CD4-positive, alpha-beta memory T cell (primary cell): ENCODE measurements at regions of chr18 and their contacts with region 1.

Region 1: DNA sequence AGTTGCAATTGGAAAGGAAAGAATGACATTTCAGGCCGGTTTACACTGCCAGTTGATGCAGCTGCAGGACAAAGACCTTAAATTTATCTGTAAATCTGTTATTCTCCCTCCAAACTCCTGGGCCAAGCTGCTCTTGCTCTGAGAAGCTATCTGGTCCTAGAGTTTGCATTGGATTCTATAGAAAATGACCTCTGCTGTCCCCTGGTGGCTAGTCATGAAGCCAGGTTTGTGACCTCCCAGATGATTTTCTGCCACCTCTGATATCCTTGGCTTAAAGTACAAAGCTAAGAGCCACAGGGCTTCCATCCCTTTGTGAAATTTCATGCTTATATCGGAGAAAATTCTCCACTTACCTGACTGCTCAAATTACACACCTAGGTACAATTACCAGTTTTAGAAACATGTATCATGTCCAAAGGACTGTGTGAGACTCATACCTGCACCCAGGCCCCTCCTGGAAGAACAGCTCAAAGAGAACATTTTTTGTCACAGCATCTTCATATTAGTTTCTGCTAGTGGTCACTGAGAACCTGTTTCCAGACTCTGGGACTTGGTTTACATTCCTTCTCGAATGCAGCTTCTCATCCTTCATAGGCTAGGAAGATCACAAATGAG is 28.9 kb upstream of the IER3IP1 start:
- DNase-seq: peak in 4 of 5 donors; percentile 23 to 37 (median 36)
- H3K4me3 ChIP-seq: no peak overlapping the region
- H3K4me3 Mint-ChIP-seq: no peak overlapping the region
- H3K27ac ChIP-seq: no peak overlapping the region
- H3K27ac Mint-ChIP-seq: no peak overlapping the region
- H3K4me1 ChIP-seq: no peaks in the 10 kb centered on the region
- H3K4me1 Mint-ChIP-seq: no peaks in the 10 kb centered on the region
- H3K27me3 ChIP-seq: no peaks in the 10 kb centered on the region
- H3K27me3 Mint-ChIP-seq: peaks cover 6 to 7% of the 10 kb centered on the region in 2 donors

Region 2: DNA sequence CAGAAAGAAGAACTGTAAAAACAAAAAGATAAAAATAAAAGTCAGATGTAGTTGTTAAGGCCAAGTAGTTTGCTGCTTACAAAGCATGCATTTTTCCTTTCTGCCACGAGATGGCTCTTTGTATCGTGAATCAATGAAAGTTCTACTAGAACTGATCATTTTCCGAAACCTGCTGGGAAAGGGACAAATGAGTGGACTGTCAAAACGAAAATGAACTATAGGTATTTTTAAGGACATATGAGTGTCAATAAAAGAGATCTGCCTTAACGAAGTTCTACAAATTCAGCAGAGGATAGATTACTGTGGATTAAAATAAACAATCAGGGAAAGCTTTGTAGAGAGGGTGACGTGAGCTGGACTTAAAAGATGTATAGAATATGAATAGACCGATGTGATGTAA is 154.5 kb before region 1 on chr18:
- CTCF ChIA-PET with region 1: interaction called, 19 read pairs
- POLR2A ChIA-PET with region 1: no interaction called
- intact Hi-C with region 1: no loop called
- DNase-seq: peak in 4 of 5 donors; percentile 12 to 27 (median 12)
- H3K4me3 ChIP-seq: no peak overlapping the region
- H3K4me3 Mint-ChIP-seq: no peak overlapping the region
- H3K27ac ChIP-seq: no peak overlapping the region
- H3K27ac Mint-ChIP-seq: no peak overlapping the region
- H3K4me1 ChIP-seq: no peaks in the 10 kb centered on the region
- H3K4me1 Mint-ChIP-seq: peaks cover 0 to 1% (median under 1%) of the 10 kb centered on the region in 4 donors
- H3K27me3 ChIP-seq: no peaks in the 10 kb centered on the region
- H3K27me3 Mint-ChIP-seq: peaks cover 0 to 3% of the 10 kb centered on the region in 2 donors

Region 3: GRCh38 chr18:47100214-47100831 is 104.7 kb before region 1 on chr18:
- CTCF ChIA-PET with region 1: interaction called, 142 read pairs
- POLR2A ChIA-PET with region 1: no interaction called
- intact Hi-C with region 1: loop called (anchors 1 kb)
- DNase-seq: peak; percentile 48 to 64 (median 55)
- H3K4me3 ChIP-seq: no peak overlapping the region
- H3K4me3 Mint-ChIP-seq: no peak overlapping the region
- H3K27ac ChIP-seq: no peak overlapping the region
- H3K27ac Mint-ChIP-seq: no peak overlapping the region
- H3K4me1 ChIP-seq: no peaks in the 10 kb centered on the region
- H3K4me1 Mint-ChIP-seq: no peaks in the 10 kb centered on the region
- H3K27me3 ChIP-seq: no peaks in the 10 kb centered on the region
- H3K27me3 Mint-ChIP-seq: no peaks in the 10 kb centered on the region

Region 4: DNA sequence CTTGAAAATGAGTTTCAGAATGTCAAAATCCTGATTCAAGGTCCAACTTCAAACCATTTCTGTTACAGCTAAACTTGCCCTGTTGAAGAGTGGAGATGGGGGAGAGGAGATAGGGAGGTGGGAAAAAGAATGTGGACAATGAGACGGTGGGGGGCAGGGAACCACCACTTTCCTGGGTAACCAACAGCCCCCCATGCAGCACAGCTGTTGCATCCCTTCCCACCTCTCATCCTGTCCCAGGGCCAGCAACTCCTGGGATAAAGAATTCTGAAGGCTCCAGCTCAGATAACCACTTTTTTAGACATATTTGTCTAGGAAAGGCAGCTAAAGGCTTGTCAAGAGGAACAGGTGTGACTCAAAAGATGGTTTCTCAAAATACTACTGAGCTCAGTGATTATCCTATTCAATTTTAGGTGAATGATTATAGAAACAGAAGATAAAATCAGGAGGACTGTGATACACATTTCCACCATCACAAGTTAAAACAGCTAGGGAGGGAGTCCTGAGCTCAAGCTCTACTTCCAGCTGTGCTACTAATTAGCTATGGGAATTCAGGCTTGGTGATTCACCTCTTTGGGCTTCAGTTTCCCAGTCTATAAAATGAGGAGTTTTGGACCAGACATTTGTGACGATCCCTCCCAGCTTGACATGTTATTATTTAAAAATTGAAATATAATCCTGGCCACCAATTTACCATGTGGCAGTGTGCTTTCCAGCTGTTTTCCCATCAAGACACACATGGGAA is 91.0 kb before region 1 on chr18:
- CTCF ChIA-PET with region 1: interaction called, 25 read pairs
- POLR2A ChIA-PET with region 1: no interaction called
- intact Hi-C with region 1: no loop called
- DNase-seq: no peak
- H3K4me3 ChIP-seq: no peak overlapping the region
- H3K4me3 Mint-ChIP-seq: no peak overlapping the region
- H3K27ac ChIP-seq: no peak overlapping the region
- H3K27ac Mint-ChIP-seq: peak overlapping the region in 1 of 7 donors; percentile 70
- H3K4me1 ChIP-seq: no peaks in the 10 kb centered on the region
- H3K4me1 Mint-ChIP-seq: no peaks in the 10 kb centered on the region
- H3K27me3 ChIP-seq: no peaks in the 10 kb centered on the region
- H3K27me3 Mint-ChIP-seq: no peaks in the 10 kb centered on the region

Region 5: GRCh38 chr18:47143899-47144485 is 61.0 kb before region 1 on chr18:
- CTCF ChIA-PET with region 1: no interaction called
- POLR2A ChIA-PET with region 1: no interaction called
- intact Hi-C with region 1: no loop called
- DNase-seq: no peak
- H3K4me3 ChIP-seq: no peak overlapping the region
- H3K4me3 Mint-ChIP-seq: no peak overlapping the region
- H3K27ac ChIP-seq: no peak overlapping the region
- H3K27ac Mint-ChIP-seq: peak overlapping the region in 1 of 7 donors; percentile 15
- H3K4me1 ChIP-seq: peaks cover 18% of the 10 kb centered on the region
- H3K4me1 Mint-ChIP-seq: peaks cover 20 to 54% (median 41%) of the 10 kb centered on the region in 4 donors
- H3K27me3 ChIP-seq: no peaks in the 10 kb centered on the region
- H3K27me3 Mint-ChIP-seq: no peaks in the 10 kb centered on the region

Region 6: GRCh38 chr18:47191961-47192360 is 13.1 kb before region 1 on chr18:
- CTCF ChIA-PET with region 1: interaction called, 14 read pairs
- POLR2A ChIA-PET with region 1: no interaction called
- intact Hi-C with region 1: no loop called
- DNase-seq: no peak
- H3K4me3 ChIP-seq: no peak overlapping the region
- H3K4me3 Mint-ChIP-seq: no peak overlapping the region
- H3K27ac ChIP-seq: no peak overlapping the region
- H3K27ac Mint-ChIP-seq: no peak overlapping the region
- H3K4me1 ChIP-seq: no peaks in the 10 kb centered on the region
- H3K4me1 Mint-ChIP-seq: no peaks in the 10 kb centered on the region
- H3K27me3 ChIP-seq: no peaks in the 10 kb centered on the region
- H3K27me3 Mint-ChIP-seq: peaks cover 13 to 27% of the 10 kb centered on the region in 2 donors